Caco-2 (cell line): ENCODE measurements at regions of chr11 and their contacts with region 1.

Region 1: GRCh38 chr11:41175304-41175972 is 284.0 kb downstream of the LRRC4C start:
- DNase-seq: no peak
- H3K4me3 ChIP-seq: no peak overlapping the region
- H3K4me3 Mint-ChIP-seq: no peak overlapping the region
- H3K27ac Mint-ChIP-seq: no peak overlapping the region
- H3K4me1 ChIP-seq: no peaks in the 10 kb centered on the region
- H3K4me1 Mint-ChIP-seq: no peaks in the 10 kb centered on the region
- H3K27me3 ChIP-seq: no peaks in the 10 kb centered on the region
- H3K27me3 Mint-ChIP-seq: peaks cover 3% of the 10 kb centered on the region
- CTCF ChIP-seq: no peak

Region 2: GRCh38 chr11:40877256-40877655 is 298.2 kb before region 1 on chr11:
- CTCF ChIA-PET with region 1: no interaction called
- POLR2A ChIA-PET with region 1: no interaction called
- intact Hi-C with region 1: loop called (anchors 5 kb)
- DNase-seq: no peak
- H3K4me3 ChIP-seq: no peak overlapping the region
- H3K4me3 Mint-ChIP-seq: no peak overlapping the region
- H3K27ac Mint-ChIP-seq: no peak overlapping the region
- H3K4me1 ChIP-seq: no peaks in the 10 kb centered on the region
- H3K4me1 Mint-ChIP-seq: no peaks in the 10 kb centered on the region
- H3K27me3 ChIP-seq: no peaks in the 10 kb centered on the region
- H3K27me3 Mint-ChIP-seq: peaks cover 3% of the 10 kb centered on the region
- CTCF ChIP-seq: no peak

Region 3: GRCh38 chr11:41281131-41281742 is 105.8 kb after region 1 on chr11:
- CTCF ChIA-PET with region 1: no interaction called
- POLR2A ChIA-PET with region 1: no interaction called
- intact Hi-C with region 1: no loop called
- DNase-seq: no peak
- H3K4me3 ChIP-seq: no peak overlapping the region
- H3K4me3 Mint-ChIP-seq: no peak overlapping the region
- H3K27ac Mint-ChIP-seq: no peak overlapping the region
- H3K4me1 ChIP-seq: no peaks in the 10 kb centered on the region
- H3K4me1 Mint-ChIP-seq: no peaks in the 10 kb centered on the region
- H3K27me3 ChIP-seq: no peaks in the 10 kb centered on the region
- H3K27me3 Mint-ChIP-seq: peaks cover 13% of the 10 kb centered on the region
- CTCF ChIP-seq: no peak